ENCODE measurements at regions of chr2 and their contacts with region 1.

Region 1: DNA sequence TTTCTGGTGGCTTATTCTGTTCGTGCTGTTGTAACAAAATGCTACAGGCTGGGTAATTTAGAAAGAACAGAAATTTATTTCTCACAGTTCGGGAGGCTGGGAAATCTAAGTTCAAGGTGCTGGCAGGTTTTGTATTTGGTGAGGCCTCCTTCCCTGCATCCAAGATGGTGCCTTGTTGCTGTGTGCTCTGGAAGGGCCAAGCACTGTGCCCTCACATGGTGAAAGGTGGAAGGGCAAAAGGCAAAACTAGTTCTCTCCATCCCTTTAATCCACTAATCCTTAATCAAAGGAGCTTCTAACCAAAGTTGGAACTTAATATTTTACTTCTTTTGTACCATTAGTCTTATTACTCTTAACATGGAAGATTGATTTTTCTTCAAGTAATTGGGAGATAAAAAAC is 7.4 kb downstream of the MRPL19 start:
- DNase-seq: no peak
- ATAC-seq: no peak
- H3K4me3 ChIP-seq: no peak overlapping the region
- H3K4me3 Mint-ChIP-seq: no peak overlapping the region
- H3K27ac ChIP-seq: no peak overlapping the region
- H3K27ac Mint-ChIP-seq: no peak overlapping the region
- H3K4me1 ChIP-seq: no peaks in the 10 kb centered on the region
- H3K4me1 Mint-ChIP-seq: peaks cover 46% of the 10 kb centered on the region
- H3K27me3 ChIP-seq: no peaks in the 10 kb centered on the region
- H3K27me3 Mint-ChIP-seq: no peaks in the 10 kb centered on the region
- CTCF ChIP-seq: no peak

Region 2: DNA sequence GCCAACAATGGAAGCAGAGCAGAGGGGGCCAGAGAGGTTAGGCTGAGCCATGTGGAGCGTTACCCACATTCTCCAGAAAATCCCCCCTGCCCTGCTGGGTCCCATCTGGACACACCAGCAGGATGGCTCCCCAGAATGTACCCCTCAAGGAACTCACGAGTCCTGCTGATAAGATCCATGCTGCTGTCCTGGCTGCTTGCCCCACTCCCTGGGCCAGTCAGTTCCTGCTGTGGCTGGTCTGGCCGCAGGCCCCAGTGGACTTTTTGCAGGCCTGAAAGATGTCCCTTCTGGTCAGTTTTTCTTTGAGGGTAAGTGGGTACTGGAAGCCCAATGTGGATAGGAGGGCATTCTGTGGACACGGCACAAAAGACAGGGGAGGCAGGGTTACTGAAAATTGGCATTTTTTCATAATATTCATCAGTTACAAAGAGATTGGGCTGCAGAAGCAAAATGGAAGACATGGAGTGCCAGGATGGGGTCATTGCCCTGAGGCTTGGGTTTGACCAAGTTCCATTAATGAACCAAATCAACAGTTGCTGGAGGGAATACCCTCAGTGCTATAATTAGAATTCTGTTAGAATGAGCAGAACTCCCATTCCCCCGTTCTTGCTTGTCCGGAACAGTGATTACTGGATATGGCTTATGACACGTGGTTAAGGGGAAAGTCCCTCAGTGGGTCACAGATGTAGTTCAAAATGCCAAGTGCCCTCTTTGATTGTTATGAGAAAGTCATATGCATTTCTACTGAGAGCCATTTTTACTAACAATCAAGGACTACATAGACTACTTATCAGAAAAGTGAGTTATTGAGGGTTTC is 1349.5 kb before region 1 on chr2:
- CTCF ChIA-PET with region 1: no interaction called
- POLR2A ChIA-PET with region 1: no interaction called
- intact Hi-C with region 1: no loop called
- DNase-seq: peak in 1 of 9 experiments; percentile 17
- ATAC-seq: no peak
- H3K4me3 ChIP-seq: no peak overlapping the region
- H3K4me3 Mint-ChIP-seq: no peak overlapping the region
- H3K27ac ChIP-seq: no peak overlapping the region
- H3K27ac Mint-ChIP-seq: no peak overlapping the region
- H3K4me1 ChIP-seq: no peaks in the 10 kb centered on the region
- H3K4me1 Mint-ChIP-seq: no peaks in the 10 kb centered on the region
- H3K27me3 ChIP-seq: no peaks in the 10 kb centered on the region
- H3K27me3 Mint-ChIP-seq: no peaks in the 10 kb centered on the region
- CTCF ChIP-seq: no peak

Region 3: DNA sequence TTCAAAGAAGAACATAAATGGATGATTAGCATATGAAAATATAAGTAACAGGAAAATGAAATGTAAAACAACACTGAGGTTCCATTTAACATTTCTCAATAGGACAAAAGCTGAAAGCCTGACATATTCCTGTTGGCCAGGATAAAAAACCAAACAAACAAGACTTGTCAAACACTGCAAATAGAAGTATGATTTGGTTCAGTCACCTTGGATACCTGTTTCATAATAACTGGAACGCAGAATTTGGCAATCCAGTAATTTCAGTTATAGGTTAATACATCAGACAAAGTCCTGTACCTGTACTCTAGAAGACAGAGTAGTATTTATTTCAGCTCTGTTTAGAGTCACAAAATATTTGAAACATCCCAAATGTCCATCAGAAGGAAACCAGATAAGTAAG is 76.7 kb before region 1 on chr2:
- CTCF ChIA-PET with region 1: no interaction called
- POLR2A ChIA-PET with region 1: no interaction called
- intact Hi-C with region 1: no loop called
- DNase-seq: no peak
- ATAC-seq: no peak
- H3K4me3 ChIP-seq: no peak overlapping the region
- H3K4me3 Mint-ChIP-seq: no peak overlapping the region
- H3K27ac ChIP-seq: no peak overlapping the region
- H3K27ac Mint-ChIP-seq: no peak overlapping the region
- H3K4me1 ChIP-seq: no peaks in the 10 kb centered on the region
- H3K4me1 Mint-ChIP-seq: no peaks in the 10 kb centered on the region
- H3K27me3 ChIP-seq: peaks cover 0 to 3% of the 10 kb centered on the region in 2 experiments
- H3K27me3 Mint-ChIP-seq: peaks cover 23% of the 10 kb centered on the region
- CTCF ChIP-seq: no peak

Region 4: DNA sequence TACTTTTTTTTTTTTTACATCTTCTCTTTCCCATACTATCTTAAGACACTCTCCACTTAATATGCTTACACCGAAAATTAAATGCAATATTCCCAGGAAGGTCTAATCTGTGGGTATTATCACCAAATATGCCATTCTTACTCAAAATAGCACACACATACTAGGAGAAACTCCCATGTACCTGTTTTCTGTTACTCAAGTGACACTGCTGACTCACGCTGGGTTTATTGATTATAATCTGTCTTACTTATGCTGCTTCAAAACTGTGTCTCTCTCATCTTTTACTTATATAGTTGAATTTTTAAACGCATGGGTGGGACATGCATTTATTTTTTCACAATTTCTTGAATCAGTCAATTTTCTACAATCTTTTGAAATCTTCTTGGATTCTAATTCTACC is 22.5 kb after region 1 on chr2:
- CTCF ChIA-PET with region 1: interaction called, 15 read pairs
- POLR2A ChIA-PET with region 1: no interaction called
- intact Hi-C with region 1: no loop called
- DNase-seq: no peak
- ATAC-seq: no peak
- H3K4me3 ChIP-seq: no peak overlapping the region
- H3K4me3 Mint-ChIP-seq: no peak overlapping the region
- H3K27ac ChIP-seq: no peak overlapping the region
- H3K27ac Mint-ChIP-seq: no peak overlapping the region
- H3K4me1 ChIP-seq: no peaks in the 10 kb centered on the region
- H3K4me1 Mint-ChIP-seq: peaks cover 6% of the 10 kb centered on the region
- H3K27me3 ChIP-seq: no peaks in the 10 kb centered on the region
- H3K27me3 Mint-ChIP-seq: no peaks in the 10 kb centered on the region
- CTCF ChIP-seq: no peak

Measured in CD8-positive, alpha-beta T cell (primary cell).